GM12878 (cell line): ENCODE measurements at regions of chr9 and their contacts with region 1.

Region 1: GRCh38 chr9:4548811-4549725 is 58.8 kb downstream of the SLC1A1 start:
- DNase-seq: no peak
- ATAC-seq: peak; percentile 97
- H3K4me3 ChIP-seq: no peak overlapping the region
- H3K27ac ChIP-seq: no peak overlapping the region
- H3K4me1 ChIP-seq: no peaks in the 10 kb centered on the region
- H3K27me3 ChIP-seq: no peaks in the 10 kb centered on the region
- CTCF ChIP-seq: peak; percentile 68 to 75 (median 68)
- EP300 ChIP-seq: no peak
- POLR2A ChIP-seq: no peak
- RAD21 ChIP-seq: peak; percentile 73

Region 2: DNA sequence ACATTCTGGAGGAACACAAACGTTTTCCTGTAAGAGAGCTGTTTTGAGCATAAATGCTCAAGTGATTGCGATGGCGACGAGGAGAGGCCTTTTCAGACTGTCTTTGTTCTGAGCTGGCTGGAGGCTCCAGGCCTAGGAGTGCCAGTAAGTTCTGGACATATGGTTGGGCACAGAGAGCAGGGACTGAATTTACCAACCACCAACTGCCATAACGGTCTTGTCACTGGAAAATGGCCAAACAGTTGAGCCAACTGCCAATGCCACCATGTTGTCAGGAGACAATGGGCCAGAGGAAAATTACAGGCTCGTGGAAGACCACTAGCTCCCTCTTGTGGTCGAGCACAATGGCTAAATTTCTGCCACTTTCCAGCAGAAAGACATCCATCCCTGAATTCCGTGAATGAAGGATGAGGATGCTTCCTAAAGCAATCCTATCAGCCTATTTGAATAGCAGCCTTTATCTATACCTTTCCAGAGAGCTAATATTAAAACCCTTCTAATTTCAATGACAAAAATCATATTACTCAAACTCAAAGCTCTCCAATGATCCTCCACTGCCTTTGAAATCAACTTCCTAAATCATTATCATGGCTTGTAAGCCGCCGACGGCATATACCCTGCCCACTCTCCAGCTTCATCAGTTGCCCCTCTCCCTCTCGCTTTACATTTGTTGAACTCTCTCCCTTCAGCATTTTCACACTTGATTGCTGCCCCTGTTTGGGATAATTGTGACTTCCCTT is 182.3 kb before region 1 on chr9:
- CTCF ChIA-PET with region 1: interaction called, 10 read pairs
- POLR2A ChIA-PET with region 1: no interaction called
- RAD21 ChIA-PET with region 1: no interaction called
- SMC1A ChIA-PET with region 1: no interaction called
- in situ Hi-C with region 1: no loop called
- intact Hi-C with region 1: no loop called
- DNase-seq: no peak
- ATAC-seq: peak; percentile 64
- H3K4me3 ChIP-seq: no peak overlapping the region
- H3K27ac ChIP-seq: no peak overlapping the region
- H3K4me1 ChIP-seq: no peaks in the 10 kb centered on the region
- H3K27me3 ChIP-seq: no peaks in the 10 kb centered on the region
- CTCF ChIP-seq: peak; percentile 73 to 74 (median 73)
- EP300 ChIP-seq: no peak
- POLR2A ChIP-seq: no peak
- RAD21 ChIP-seq: peak; percentile 71

Region 3: GRCh38 chr9:4393806-4394523 is 155.1 kb before region 1 on chr9:
- CTCF ChIA-PET with region 1: interaction called, 14 read pairs
- POLR2A ChIA-PET with region 1: no interaction called
- RAD21 ChIA-PET with region 1: interaction called, 28 read pairs
- SMC1A ChIA-PET with region 1: interaction called, 11 read pairs
- in situ Hi-C with region 1: loop called (anchors 10 kb)
- intact Hi-C with region 1: no loop called
- DNase-seq: no peak
- ATAC-seq: no peak
- H3K4me3 ChIP-seq: no peak overlapping the region
- H3K27ac ChIP-seq: no peak overlapping the region
- H3K4me1 ChIP-seq: no peaks in the 10 kb centered on the region
- H3K27me3 ChIP-seq: no peaks in the 10 kb centered on the region
- CTCF ChIP-seq: no peak
- EP300 ChIP-seq: no peak
- POLR2A ChIP-seq: no peak
- RAD21 ChIP-seq: 0 out of 2 replicates have a peak, but pooled peaks have one; percentile 15

Region 4: GRCh38 chr9:4489919-4490704 is 59.0 kb before region 1 on chr9 and contains the start of gene SLC1A1:
- CTCF ChIA-PET with region 1: interaction called, 6 read pairs
- POLR2A ChIA-PET with region 1: interaction called, 3 read pairs
- RAD21 ChIA-PET with region 1: interaction called, 3 read pairs
- SMC1A ChIA-PET with region 1: interaction called, 4 read pairs
- in situ Hi-C with region 1: no loop called
- intact Hi-C with region 1: loop called (anchors 5 kb)
- DNase-seq: peak; percentile 55
- ATAC-seq: peak; percentile 76
- H3K4me3 ChIP-seq: peak within 1 kb of the TSS; percentile 99
- H3K27ac ChIP-seq: peak within 1 kb of the TSS; percentile 73
- H3K4me1 ChIP-seq: peaks cover 14% of the 10 kb centered on the region; the same call in 1 of the 2 replicates
- H3K27me3 ChIP-seq: no peaks in the 10 kb centered on the region
- CTCF ChIP-seq: no peak
- EP300 ChIP-seq: 0 out of 4 replicates have a peak, but pooled peaks of 1 of the 2 experiments have one; percentile 14
- POLR2A ChIP-seq: peak; percentile 66
- RAD21 ChIP-seq: 0 out of 2 replicates have a peak, but pooled peaks have one; percentile 7
- polyA plus RNA-seq, gene SLC1A1: 7.3 to 8.7 TPM

Region 5: GRCh38 chr9:4559261-4560182 is 10.5 kb after region 1 on chr9:
- CTCF ChIA-PET with region 1: interaction called, 9 read pairs
- POLR2A ChIA-PET with region 1: no interaction called
- RAD21 ChIA-PET with region 1: interaction called, 3 read pairs
- SMC1A ChIA-PET with region 1: interaction called, 21 read pairs
- in situ Hi-C with region 1: no loop called
- intact Hi-C with region 1: no loop called
- DNase-seq: peak; percentile 69
- ATAC-seq: peak; percentile 93
- H3K4me3 ChIP-seq: no peak overlapping the region
- H3K27ac ChIP-seq: peak overlapping the region; percentile 81
- H3K4me1 ChIP-seq: peaks cover 15% of the 10 kb centered on the region
- H3K27me3 ChIP-seq: no peaks in the 10 kb centered on the region
- CTCF ChIP-seq: no peak
- EP300 ChIP-seq: no peak
- POLR2A ChIP-seq: no peak
- RAD21 ChIP-seq: no peak

Region 6: DNA sequence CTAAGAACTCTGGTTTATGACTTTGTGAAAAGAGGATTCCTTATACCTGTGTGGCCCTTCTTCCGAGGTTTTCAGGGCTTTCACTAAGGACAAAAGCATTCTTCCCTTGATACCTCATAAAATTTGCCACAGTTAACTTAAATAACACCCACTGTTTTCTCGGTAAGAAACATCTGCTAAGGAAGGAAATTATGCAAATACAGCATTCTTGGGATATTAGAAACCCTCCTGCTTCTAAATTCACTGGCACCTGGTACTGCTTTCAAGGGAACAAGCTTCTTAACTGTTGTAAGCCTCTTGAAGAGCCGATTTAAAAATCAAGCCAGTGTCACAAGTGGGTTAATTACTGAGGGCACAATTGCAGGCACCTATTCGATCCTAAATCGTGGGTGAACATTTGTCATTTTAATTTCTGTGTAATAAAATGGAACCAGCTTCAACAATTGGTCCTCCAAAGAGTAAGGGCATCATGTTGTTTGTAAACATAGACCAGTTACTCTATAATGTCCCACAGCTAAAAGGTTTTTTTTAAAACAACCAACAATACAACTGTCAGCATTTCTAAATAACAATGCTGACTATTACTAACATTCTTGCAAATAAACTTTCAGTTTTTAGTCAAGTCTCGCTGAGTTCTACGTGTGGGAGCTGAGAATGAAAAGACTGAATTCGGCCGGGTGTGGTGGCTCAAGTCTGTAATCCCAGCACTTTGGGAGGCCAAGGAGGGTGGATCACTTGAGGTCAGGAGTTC is 165.4 kb after region 1 on chr9:
- CTCF ChIA-PET with region 1: no interaction called
- POLR2A ChIA-PET with region 1: no interaction called
- RAD21 ChIA-PET with region 1: no interaction called
- SMC1A ChIA-PET with region 1: no interaction called
- in situ Hi-C with region 1: no loop called
- intact Hi-C with region 1: no loop called
- DNase-seq: no peak
- ATAC-seq: no peak
- H3K4me3 ChIP-seq: no peak overlapping the region
- H3K27ac ChIP-seq: no peak overlapping the region
- H3K4me1 ChIP-seq: no peaks in the 10 kb centered on the region
- H3K27me3 ChIP-seq: no peaks in the 10 kb centered on the region
- CTCF ChIP-seq: no peak
- EP300 ChIP-seq: no peak
- POLR2A ChIP-seq: no peak
- RAD21 ChIP-seq: no peak